GM10248 (cell line): ENCODE measurements at regions of chr12 and their contacts with region 1.

Region 1: DNA sequence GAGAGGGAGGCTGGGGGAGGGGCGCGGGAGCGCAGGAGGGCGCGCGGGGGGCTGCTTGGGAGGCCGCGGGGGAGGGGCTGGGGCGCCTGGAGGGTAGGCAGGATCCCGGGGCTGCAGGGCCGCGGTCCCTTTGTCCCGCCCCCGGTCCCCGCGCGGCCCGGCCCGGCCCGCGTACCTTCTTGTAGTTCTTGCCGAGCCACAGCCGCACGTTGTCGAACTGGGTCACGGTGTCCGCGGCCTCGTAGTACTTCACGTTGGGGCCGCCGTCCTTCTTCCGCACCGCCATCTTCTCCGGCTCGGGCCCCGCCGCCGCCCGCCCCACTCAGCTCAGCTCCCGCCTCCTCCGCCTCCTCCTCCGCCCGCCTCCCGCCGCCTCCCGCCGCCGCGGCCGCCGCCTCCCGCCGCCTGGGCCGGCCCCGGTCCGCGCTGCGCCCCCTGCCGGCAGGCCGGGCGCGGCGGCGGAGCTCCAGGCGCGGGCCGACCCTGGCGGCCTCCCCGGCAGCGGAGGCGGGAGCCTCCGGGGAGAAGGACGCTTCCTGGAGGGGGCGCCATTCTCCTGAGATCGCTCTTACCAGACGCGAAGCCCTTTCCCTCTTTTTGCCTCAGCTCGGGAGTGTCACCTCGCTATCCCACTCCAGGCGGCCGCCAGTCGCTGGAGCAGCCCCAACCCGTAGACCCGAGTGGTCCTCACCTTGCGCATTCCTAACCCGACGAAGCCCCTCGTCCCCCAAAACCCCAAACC is at the start of gene SMARCC2:
- DNase-seq: peak; percentile 95
- CTCF ChIP-seq: peak; percentile 88

Region 2: GRCh38 chr12:56158029-56158925 is 31.1 kb before region 1 on chr12 and contains the start of gene MYL6:
- CTCF ChIA-PET with region 1: interaction called, 47 read pairs
- POLR2A ChIA-PET with region 1: interaction called, 9 read pairs
- DNase-seq: peak; percentile 94
- CTCF ChIP-seq: no peak

Region 3: DNA sequence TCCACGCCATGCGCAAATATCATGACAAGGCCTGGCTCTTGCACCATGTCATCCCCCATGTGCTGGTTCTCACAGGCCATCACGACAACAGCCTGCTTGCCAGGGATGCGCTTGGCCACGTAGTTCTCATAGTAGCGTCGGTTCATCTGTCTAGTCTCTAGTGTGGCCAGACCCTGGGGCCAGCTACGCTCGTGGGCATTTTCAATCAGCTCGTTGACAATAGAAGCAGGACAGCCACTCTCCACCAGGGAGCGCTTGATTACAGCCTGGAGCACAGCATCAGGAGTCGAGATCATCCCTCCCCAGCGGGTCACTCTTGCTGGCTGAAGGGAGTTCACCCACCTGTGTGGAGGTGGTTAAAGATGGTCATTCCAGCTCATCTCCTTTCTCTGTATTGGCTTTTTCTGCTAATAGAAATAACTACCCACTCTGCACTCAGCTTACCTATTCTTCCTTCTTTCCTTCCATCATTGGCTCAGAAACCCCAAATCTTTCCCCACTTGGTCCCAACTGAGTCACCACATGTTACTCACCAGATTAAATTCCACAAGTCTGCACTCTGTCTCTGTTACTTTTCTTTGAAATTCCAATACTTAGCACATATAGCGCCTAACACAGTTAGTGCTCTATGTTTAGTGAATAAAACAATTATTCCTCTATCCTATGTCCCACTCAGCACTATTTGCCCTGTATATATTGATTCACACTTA is 17.3 kb after region 1 on chr12:
- CTCF ChIA-PET with region 1: interaction called, 70 read pairs
- POLR2A ChIA-PET with region 1: interaction called, 9 read pairs
- DNase-seq: peak; percentile 48
- CTCF ChIP-seq: peak; percentile 53

Region 4: DNA sequence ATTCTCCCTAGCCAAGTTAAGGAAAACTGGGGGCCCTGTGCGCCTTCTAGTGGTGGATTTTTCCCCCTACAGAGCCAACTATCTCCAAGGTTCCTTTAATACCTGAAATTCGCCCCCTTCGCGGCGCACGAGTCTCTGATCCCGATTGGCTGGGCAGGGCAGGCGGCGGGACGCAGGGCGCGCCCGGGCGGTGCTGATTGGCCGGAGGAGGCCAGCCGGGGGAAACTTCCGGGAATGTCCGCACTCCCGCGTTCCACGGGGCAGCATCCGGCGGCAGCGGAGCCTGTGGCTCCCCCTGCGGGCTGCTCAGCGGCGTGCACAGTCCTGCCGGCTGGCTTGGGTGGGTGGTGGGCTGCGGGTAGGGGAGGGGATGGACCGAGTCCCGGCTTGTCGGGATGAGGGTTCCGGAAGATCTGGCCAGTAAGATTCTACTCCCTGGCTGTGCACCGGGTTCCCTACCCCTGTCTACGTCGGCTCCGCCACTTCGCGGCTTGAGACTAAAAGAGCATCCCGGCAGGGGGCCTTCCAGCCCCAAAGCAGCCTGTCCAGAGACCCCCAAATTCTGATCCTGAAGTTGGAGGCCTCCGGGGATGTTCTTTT is 34.9 kb after region 1 on chr12 and contains the start of gene NABP2:
- CTCF ChIA-PET with region 1: interaction called, 34 read pairs
- POLR2A ChIA-PET with region 1: interaction called, 7 read pairs
- DNase-seq: peak; percentile 99
- CTCF ChIP-seq: peak; percentile 90

Region 5: DNA sequence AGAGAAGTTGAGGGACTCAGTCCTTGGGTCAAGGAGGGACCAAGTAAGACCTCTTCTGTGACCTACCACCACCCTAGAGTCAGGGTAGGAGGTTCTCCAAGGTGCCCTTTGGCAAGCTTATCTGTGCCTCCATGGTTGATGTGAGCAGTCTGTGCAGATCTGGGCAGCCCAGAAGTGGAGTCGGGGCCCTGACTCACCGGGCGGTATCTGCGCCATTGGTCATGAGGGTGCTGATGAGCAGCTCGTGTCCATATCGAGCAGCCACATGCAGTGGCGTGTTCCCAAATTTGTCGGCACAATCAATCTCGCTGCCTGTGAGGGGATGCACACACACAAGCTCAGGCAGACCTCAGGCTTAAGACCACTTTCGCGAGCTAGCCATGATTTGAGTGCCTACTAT is 63.7 kb after region 1 on chr12:
- CTCF ChIA-PET with region 1: interaction called, 11 read pairs
- POLR2A ChIA-PET with region 1: no interaction called
- DNase-seq: no peak
- CTCF ChIP-seq: no peak

Region 6: GRCh38 chr12:56461235-56462159 is 272.1 kb after region 1 on chr12:
- CTCF ChIA-PET with region 1: interaction called, 22 read pairs
- POLR2A ChIA-PET with region 1: no interaction called
- DNase-seq: no peak
- CTCF ChIP-seq: no peak